ENCODE measurements at regions of chr12 and their contacts with region 1.

Region 1: GRCh38 chr12:93098077-93098476 is 169.0 kb upstream of the EEA1 start:
- DNase-seq: peak; percentile 75
- H3K4me3 Mint-ChIP-seq: no peak overlapping the region
- H3K27ac Mint-ChIP-seq: no peak overlapping the region
- H3K4me1 Mint-ChIP-seq: peaks cover 9% of the 10 kb centered on the region
- H3K27me3 Mint-ChIP-seq: no peaks in the 10 kb centered on the region

Region 2: GRCh38 chr12:93109551-93110203 is 11.6 kb after region 1 on chr12:
- CTCF ChIA-PET with region 1: interaction called, 30 read pairs
- POLR2A ChIA-PET with region 1: no interaction called
- intact Hi-C with region 1: no loop called
- DNase-seq: peak; percentile 68
- H3K4me3 Mint-ChIP-seq: no peak overlapping the region
- H3K27ac Mint-ChIP-seq: peak overlapping the region; percentile 75
- H3K4me1 Mint-ChIP-seq: peaks cover 19% of the 10 kb centered on the region
- H3K27me3 Mint-ChIP-seq: no peaks in the 10 kb centered on the region

Region 3: GRCh38 chr12:93137656-93138612 is 39.9 kb after region 1 on chr12:
- CTCF ChIA-PET with region 1: interaction called, 9 read pairs
- POLR2A ChIA-PET with region 1: interaction called, 5 read pairs
- intact Hi-C with region 1: loop called (anchors 5 kb)
- DNase-seq: peak; percentile 13
- H3K4me3 Mint-ChIP-seq: no peak overlapping the region
- H3K27ac Mint-ChIP-seq: no peak overlapping the region
- H3K4me1 Mint-ChIP-seq: peaks cover 14% of the 10 kb centered on the region
- H3K27me3 Mint-ChIP-seq: no peaks in the 10 kb centered on the region

Region 4: GRCh38 chr12:93183940-93184671 is 86.0 kb after region 1 on chr12:
- CTCF ChIA-PET with region 1: no interaction called
- POLR2A ChIA-PET with region 1: no interaction called
- intact Hi-C with region 1: no loop called
- DNase-seq: no peak
- H3K4me3 Mint-ChIP-seq: no peak overlapping the region
- H3K27ac Mint-ChIP-seq: peak overlapping the region; percentile 20
- H3K4me1 Mint-ChIP-seq: peaks cover 10% of the 10 kb centered on the region
- H3K27me3 Mint-ChIP-seq: no peaks in the 10 kb centered on the region

Region 5: GRCh38 chr12:93219947-93220346 is 121.9 kb after region 1 on chr12:
- CTCF ChIA-PET with region 1: no interaction called
- POLR2A ChIA-PET with region 1: no interaction called
- intact Hi-C with region 1: no loop called
- DNase-seq: no peak
- H3K4me3 Mint-ChIP-seq: no peak overlapping the region
- H3K27ac Mint-ChIP-seq: no peak overlapping the region
- H3K4me1 Mint-ChIP-seq: no peaks in the 10 kb centered on the region
- H3K27me3 Mint-ChIP-seq: no peaks in the 10 kb centered on the region

Region 6: DNA sequence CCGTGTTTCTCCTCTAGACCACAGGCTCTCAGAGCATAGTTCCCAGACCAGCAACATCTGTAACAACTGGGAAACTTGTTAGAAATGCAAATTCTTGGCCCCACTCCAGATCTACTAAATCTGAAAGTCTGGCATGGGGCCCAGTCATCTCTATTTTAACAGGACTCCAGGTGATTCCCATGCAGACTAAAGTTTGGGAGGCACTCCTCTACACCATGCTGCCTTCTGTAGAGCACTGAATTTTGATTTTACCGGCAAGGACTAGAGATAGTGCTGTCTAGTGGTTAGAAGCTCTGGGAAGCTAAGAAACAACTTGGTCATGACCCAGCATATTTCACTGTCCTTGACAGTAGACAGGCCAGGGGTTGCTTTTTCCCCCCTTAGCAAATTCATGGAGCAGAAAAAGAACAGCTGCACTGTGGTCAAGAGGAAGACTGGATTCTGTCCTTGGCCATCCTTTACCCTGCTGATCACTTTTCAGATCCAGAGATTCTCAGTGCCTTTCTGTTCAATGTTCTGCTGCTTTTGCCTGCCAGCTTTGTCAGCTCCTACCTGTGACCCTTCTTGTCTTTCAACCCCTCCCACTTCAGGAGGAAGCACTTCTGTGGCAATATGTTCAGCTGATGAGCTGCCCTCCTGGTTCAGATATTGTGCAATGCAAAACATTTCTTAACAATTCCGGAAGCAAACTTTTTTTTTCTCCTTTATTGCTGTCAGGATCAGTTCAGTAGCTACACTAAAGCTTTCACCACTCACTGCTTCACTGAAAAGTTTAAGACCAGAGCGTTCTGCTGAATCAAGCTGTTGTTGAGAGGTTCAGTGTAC is 145.8 kb after region 1 on chr12:
- CTCF ChIA-PET with region 1: interaction called, 4 read pairs
- POLR2A ChIA-PET with region 1: no interaction called
- intact Hi-C with region 1: loop called (anchors 5 kb)
- DNase-seq: peak; percentile 18
- H3K4me3 Mint-ChIP-seq: no peak overlapping the region
- H3K27ac Mint-ChIP-seq: no peak overlapping the region
- H3K4me1 Mint-ChIP-seq: peaks cover 24% of the 10 kb centered on the region
- H3K27me3 Mint-ChIP-seq: no peaks in the 10 kb centered on the region

Region 7: DNA sequence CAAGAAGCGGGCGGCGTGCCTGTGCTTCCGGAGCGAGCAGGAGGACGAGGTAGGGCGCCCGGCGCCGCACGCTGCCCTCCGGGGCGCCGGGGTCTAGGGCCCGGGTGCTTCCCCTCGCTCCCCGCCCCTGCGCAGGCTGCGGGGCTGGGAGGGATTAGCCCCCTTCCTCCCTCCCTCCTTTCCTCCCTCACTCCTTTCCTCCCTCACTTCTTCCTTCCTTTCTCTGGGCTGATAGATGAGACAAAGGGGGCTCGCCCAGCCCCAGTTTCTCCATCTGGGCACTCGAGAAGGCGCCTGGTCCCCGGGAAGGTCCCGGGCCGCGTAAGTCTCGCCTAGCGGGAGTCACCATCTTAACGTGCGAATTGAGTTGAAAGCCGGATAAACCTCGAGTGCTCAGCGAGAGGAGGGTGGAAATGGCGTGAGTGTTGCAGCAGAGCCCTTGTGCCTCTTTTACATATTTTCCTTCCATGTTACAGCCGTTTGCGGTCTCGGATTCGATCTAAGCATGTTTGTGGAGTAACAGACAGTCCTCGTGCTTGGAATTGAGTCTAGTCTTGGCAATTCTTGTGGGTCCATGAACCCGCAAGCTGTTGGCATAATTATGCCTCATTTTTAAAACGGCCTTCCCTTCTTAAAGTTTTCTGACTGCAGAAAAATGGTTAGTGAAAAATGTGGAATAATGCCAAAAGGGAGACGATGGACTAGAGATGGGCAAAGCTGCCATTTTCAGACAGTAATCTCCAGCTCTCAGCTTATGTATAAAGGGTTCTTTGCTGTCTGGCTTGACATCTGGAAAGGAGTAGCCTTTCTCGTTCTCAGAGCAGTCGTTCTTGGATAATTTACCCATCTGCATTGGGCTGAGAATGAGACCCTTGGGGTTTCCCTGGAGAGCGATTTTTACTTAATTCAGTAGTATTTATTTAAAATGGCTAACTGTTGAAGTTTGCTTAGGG is 280.6 kb after region 1 on chr12:
- CTCF ChIA-PET with region 1: interaction called, 14 read pairs
- POLR2A ChIA-PET with region 1: no interaction called
- intact Hi-C with region 1: loop called (anchors 1 kb)
- DNase-seq: peak; percentile 74
- H3K4me3 Mint-ChIP-seq: peak overlapping the region; percentile 99
- H3K27ac Mint-ChIP-seq: peak overlapping the region; percentile 99
- H3K4me1 Mint-ChIP-seq: peaks cover 40% of the 10 kb centered on the region
- H3K27me3 Mint-ChIP-seq: no peaks in the 10 kb centered on the region

Region 8: DNA sequence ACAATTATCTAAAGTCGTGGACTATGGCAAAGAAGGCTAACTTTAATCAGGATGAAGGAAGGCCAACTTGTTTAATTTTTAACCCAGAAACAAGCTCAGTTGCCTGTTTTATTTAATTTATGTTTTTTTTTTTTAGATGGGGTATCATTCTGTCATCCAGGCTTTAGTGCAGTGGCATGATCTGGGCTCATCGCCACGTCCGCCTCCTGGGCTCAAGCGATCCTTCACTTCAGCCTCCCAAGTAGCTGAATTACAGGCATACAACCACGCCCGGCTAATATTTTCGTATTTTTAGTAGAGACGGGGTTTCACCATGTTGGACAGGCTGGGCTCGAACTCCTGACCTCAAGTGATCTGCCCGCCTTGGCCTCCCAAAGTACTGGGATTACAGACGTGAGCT is 299.3 kb after region 1 on chr12:
- CTCF ChIA-PET with region 1: interaction called, 33 read pairs
- POLR2A ChIA-PET with region 1: no interaction called
- intact Hi-C with region 1: loop called (anchors 2 kb)
- DNase-seq: no peak
- H3K4me3 Mint-ChIP-seq: no peak overlapping the region
- H3K27ac Mint-ChIP-seq: no peak overlapping the region
- H3K4me1 Mint-ChIP-seq: peaks cover 6% of the 10 kb centered on the region
- H3K27me3 Mint-ChIP-seq: no peaks in the 10 kb centered on the region

Region 9: DNA sequence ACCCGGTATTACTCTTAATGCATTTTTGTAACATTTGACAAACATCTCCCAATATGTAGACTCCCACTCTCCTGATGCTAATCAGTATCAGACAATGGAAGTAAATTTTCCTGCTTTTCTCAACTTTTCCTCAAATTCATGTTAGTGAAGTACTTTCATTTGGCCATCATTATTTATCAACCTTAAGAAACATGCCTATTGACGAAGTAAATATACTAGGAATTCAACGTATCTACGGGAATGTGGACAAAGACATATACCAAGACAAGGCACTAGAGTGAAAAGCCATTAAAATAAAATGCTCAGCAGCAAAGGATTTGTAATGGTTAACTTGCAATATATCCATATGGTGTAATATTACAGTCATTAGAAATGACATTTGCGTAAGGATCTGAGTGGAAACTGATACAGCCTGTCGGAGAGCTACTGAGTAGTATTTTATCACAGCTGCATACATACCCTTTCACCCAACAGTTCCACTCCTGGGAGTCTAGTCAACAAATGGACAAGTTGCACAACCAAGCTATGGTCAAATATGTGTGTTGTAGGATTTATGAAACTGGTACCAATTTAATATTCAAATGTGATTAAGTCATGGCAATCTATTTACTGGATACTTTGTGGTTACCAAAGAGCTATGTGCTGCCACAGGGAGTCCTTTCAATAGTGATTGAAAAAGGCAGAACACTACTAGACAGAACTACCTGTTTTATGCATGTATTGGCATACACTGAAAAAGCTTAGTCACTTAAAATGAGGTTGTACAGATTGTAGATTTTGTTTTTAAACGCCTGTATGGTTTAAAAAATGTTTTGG is 306.1 kb after region 1 on chr12:
- CTCF ChIA-PET with region 1: no interaction called
- POLR2A ChIA-PET with region 1: no interaction called
- intact Hi-C with region 1: loop called (anchors 5 kb)
- DNase-seq: no peak
- H3K4me3 Mint-ChIP-seq: no peak overlapping the region
- H3K27ac Mint-ChIP-seq: peak overlapping the region; percentile 36
- H3K4me1 Mint-ChIP-seq: peaks cover 44% of the 10 kb centered on the region
- H3K27me3 Mint-ChIP-seq: no peaks in the 10 kb centered on the region

Measured in activated CD4-positive, alpha-beta memory T cell treated with anti-CD3 and anti-CD28 coated beads for 36 hours (primary cell).